ENCODE measurements at regions of chr19 and their contacts with region 1.

Region 1: DNA sequence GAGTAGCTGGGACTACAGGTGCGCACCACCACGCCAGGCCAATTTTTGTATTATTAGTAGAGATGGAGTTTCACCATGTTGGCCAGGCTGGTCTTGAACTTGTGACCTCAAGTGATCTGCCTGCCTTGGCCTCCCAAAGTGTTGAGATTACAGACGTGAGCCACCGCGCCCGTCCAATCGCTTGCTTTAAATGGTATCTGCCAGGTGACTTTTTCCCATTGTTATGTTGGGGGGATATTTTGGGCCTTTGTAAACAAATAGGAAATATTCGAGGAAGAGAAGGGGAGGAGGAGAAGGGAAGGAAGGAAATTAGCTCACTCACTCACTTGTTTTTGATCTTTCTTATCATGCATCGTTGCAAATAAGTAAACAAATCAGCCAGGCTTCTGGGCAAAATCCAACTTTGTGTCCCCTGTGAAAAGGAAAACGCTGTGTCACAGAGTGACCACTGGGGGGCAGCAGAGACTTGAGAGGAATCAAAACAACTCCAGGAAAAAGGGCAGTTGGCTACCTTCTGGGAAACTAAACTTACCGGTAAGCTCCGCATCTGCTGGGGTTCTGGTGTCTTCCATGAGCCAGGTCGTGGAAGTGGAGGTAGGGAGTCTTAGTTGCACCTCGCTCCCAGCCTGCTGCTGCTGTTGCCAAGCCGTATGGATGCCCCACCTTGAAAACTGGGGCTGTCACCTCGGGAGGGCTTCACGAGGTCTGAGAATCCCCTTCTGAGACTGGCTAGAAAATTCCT is 9.3 kb upstream of the RANBP3 start:
- H3K4me3 ChIP-seq: peak overlapping the region; percentile 23
- H3K27ac ChIP-seq: no peak overlapping the region
- H3K4me1 ChIP-seq: no peaks in the 10 kb centered on the region
- CTCF ChIP-seq: peak; percentile 77

Region 2: DNA sequence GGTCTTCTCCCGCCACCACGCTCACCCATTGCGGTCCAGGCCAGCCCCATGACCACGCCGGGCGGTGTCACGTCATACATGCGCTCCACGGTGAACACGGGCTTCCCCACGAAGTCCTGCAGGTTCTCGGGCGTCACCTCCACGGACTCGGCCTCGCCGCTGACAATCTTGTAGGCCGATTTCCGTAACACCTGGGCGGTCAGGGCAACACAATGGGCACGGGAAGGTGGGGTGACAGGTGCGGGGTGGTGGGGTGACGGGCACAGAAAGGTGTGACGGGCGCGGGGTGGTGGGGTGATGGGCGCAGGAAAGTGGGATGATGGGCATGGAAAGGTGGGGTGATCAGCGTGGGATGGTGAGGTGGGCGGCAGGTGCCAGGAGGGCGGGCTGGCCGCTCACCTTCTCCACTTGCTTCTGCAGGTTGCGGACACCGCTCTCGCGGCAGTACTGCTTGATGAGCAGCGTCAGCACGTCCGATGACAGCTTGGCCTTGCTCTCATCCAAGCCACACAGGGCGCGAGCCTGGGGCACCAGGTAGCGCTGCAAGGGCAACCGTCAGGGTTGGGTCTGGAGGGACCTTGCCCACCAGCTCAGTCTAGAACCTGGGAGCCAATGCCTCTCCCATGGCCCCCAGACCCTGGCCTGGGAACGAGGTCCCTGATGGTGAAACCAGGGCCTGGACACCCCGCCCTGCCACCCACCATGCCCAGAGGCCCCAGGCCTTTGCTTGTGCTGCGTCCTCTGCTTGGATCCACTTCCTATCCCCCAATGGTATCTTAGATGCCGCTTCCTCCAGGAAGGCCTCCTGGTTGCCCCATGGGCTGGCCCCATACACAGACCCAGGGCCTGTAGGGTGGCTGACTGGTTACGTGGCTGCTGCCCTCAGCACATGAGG is 292.6 kb before region 1 on chr19:
- CTCF ChIA-PET with region 1: no interaction called
- POLR2A ChIA-PET with region 1: no interaction called
- H3K4me3 ChIP-seq: no peak overlapping the region
- H3K27ac ChIP-seq: peak overlapping the region; percentile 50; the same call in 1 of the 2 replicates
- H3K4me1 ChIP-seq: no peaks in the 10 kb centered on the region; the same call in 1 of the 2 replicates
- CTCF ChIP-seq: no peak

Region 3: DNA sequence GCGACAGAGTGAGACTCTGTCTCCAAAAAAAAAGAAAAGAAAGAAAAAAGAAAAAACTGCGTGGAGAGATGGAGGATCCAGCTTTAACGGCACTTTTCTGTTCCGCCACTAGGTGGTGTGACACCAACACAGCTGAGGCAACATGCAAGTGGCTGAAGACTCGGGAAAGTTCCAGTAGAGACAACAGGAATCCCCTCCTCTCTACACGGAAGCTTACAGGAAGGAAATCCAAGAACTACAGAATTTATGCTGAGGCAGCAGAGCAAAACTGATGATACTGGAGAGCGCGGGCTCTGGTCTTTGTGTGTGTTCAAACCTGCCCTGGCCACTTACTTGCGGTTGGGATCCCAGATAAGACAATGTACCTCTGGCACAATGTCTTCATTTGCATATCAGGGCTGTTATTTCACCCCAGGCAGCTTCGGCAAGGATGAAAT is 19.2 kb before region 1 on chr19:
- CTCF ChIA-PET with region 1: interaction called, 63 read pairs
- POLR2A ChIA-PET with region 1: no interaction called
- H3K4me3 ChIP-seq: no peak overlapping the region
- H3K27ac ChIP-seq: peak overlapping the region; percentile 52
- H3K4me1 ChIP-seq: peaks cover 9% of the 10 kb centered on the region
- CTCF ChIP-seq: peak; percentile 74; the same call in 1 of the 2 replicates

Region 4: DNA sequence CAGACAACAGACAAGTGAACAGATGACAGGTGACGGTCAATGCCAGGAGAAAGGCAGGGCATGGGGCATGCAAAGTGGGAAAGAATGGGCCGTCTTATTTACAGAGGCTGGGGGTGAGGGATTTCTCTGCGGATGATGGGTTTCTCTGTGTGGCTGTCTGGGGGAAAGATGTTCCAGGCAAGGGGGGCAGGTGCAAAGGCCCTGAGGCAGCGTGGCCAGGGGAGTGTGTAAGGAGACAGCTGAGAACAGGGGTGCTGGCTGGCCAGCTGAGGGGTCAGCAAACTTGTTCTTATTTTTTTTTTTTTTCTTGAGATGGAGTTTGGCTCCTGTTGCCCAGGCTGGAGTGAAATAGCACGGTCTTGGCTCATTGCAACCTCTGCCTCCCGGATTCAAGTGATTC is 12.4 kb after region 1 on chr19:
- CTCF ChIA-PET with region 1: interaction called, 10 read pairs
- POLR2A ChIA-PET with region 1: interaction called, 3 read pairs
- H3K4me3 ChIP-seq: no peak overlapping the region
- H3K27ac ChIP-seq: no peak overlapping the region
- H3K4me1 ChIP-seq: no peaks in the 10 kb centered on the region
- CTCF ChIP-seq: no peak

Region 5: GRCh38 chr19:6030214-6030507 is 42.9 kb after region 1 on chr19:
- CTCF ChIA-PET with region 1: interaction called, 11 read pairs
- POLR2A ChIA-PET with region 1: no interaction called
- H3K4me3 ChIP-seq: no peak overlapping the region
- H3K27ac ChIP-seq: no peak overlapping the region
- H3K4me1 ChIP-seq: no peaks in the 10 kb centered on the region
- CTCF ChIP-seq: no peak

Region 6: DNA sequence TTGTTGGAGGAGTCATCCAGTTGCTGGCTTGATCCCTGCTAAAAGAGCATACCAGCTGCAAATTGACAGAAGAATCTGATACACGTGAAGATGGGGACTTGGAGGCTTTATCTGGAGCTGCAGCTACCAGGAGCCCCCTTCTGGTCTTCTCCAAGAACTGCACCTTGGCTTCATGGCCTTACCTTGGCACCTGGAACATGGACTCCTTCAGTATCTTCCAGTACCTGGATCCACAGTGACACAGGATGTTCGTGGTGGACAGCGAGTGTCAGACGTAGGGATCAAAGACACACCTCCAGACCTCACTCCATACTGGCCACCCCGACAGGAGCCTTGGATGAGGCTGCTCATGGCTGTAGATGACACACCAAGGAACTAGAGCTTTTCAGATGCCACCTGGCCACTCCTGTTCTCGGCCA is 138.3 kb after region 1 on chr19:
- CTCF ChIA-PET with region 1: interaction called, 14 read pairs
- POLR2A ChIA-PET with region 1: no interaction called
- H3K4me3 ChIP-seq: no peak overlapping the region
- H3K27ac ChIP-seq: no peak overlapping the region
- H3K4me1 ChIP-seq: no peaks in the 10 kb centered on the region
- CTCF ChIP-seq: peak; percentile 58

Region 7: DNA sequence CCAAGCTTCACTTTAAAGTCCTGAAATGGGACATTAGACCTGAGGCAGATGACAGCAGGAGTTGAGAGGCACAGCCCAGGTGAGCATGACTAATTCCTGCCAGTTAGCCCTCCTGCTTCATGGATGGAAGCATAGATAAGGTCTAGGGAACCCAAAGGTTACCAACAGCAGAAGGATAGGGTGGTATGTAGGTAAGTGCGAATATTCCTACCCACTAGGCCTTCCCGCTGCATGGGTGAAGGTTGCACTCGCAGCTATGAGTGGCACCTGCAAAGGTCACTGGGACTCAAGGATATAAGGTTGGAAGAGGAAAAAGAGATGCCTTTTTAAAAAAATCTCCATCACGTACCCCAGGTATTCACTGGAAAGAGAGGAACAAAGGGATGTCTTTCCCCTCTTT is 304.8 kb after region 1 on chr19:
- CTCF ChIA-PET with region 1: no interaction called
- POLR2A ChIA-PET with region 1: no interaction called
- H3K4me3 ChIP-seq: no peak overlapping the region
- H3K27ac ChIP-seq: no peak overlapping the region
- H3K4me1 ChIP-seq: no peaks in the 10 kb centered on the region
- CTCF ChIP-seq: no peak

Measured in HEK293 (cell line).